H1 (cell line): ENCODE measurements at regions of chr2 and their contacts with region 1.

Region 1: GRCh38 chr2:1750933-1751766 is 6.8 kb upstream of the PXDN start:
- DNase-seq: peak; percentile 65 to 85
- H3K4me3 ChIP-seq: no peak overlapping the region
- H3K27ac ChIP-seq: no peak overlapping the region
- H3K4me1 ChIP-seq: peaks cover 0 to 3% (median 0%) of the 10 kb centered on the region in 4 experiments; a peak in 1 of 7 replicates
- H3K27me3 ChIP-seq: peaks cover 0 to 21% (median 5%) of the 10 kb centered on the region in 4 experiments; a peak in 3 of 7 replicates
- CTCF ChIP-seq: peak in 2 of 3 experiments; percentile 78 to 92; a peak in 3 of 4 replicates
- EP300 ChIP-seq: no peak
- POLR2A ChIP-seq: no peak
- RAD21 ChIP-seq: peak; percentile 70 to 74

Region 2: GRCh38 chr2:1591978-1592907 is 158.9 kb before region 1 on chr2:
- CTCF ChIA-PET with region 1: interaction called, 14 read pairs
- POLR2A ChIA-PET with region 1: no interaction called
- DNase-seq: peak; percentile 82 to 83
- H3K4me3 ChIP-seq: 0 out of 8 replicates have a peak overlapping the region, but pooled peaks of 1 of the 4 experiments have one; percentile 15
- H3K27ac ChIP-seq: no peak overlapping the region
- H3K4me1 ChIP-seq: peaks cover 0 to 16% (median 10%) of the 10 kb centered on the region in 4 experiments; a peak in 6 of 7 replicates
- H3K27me3 ChIP-seq: no peaks in the 10 kb centered on the region
- CTCF ChIP-seq: peak in 2 of 3 experiments; percentile 87 to 93; a peak in 3 of 4 replicates
- EP300 ChIP-seq: no peak
- POLR2A ChIP-seq: no peak
- RAD21 ChIP-seq: peak; percentile 89 to 92

Region 3: GRCh38 chr2:1685957-1686784 is 65.0 kb before region 1 on chr2:
- CTCF ChIA-PET with region 1: interaction called, 17 read pairs
- POLR2A ChIA-PET with region 1: no interaction called
- DNase-seq: peak in 1 of 2 experiments; percentile 64
- H3K4me3 ChIP-seq: no peak overlapping the region
- H3K27ac ChIP-seq: peak overlapping the region; percentile 63; the same call in 1 of the 2 replicates
- H3K4me1 ChIP-seq: peaks cover 0 to 11% (median 5%) of the 10 kb centered on the region in 4 experiments; a peak in 5 of 7 replicates
- H3K27me3 ChIP-seq: no peaks in the 10 kb centered on the region
- CTCF ChIP-seq: no peak
- EP300 ChIP-seq: no peak
- POLR2A ChIP-seq: no peak
- RAD21 ChIP-seq: no peak

Region 4: DNA sequence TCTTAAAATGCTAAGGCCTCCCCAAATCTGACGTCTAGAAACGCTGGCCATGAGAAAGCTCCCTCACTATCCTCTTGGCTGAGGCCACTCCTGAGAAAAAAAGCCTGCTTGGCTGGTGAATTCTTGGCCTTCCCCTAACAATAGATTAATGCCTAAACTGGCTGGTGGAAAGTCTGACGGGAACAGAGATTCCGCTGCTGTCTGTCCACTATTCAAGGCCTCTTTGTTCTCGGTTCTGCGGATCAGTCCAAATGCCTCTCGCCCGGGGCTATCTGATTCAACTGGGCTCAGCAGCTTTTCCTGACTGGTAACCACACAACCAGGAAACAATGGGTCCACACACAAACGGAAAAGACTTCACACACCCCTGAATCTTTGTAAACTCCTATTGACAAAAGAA is 34.0 kb before region 1 on chr2:
- CTCF ChIA-PET with region 1: interaction called, 13 read pairs
- POLR2A ChIA-PET with region 1: interaction called, 4 read pairs
- DNase-seq: no peak
- H3K4me3 ChIP-seq: no peak overlapping the region
- H3K27ac ChIP-seq: no peak overlapping the region
- H3K4me1 ChIP-seq: peaks cover 0 to 24% (median 2%) of the 10 kb centered on the region in 4 experiments; a peak in 5 of 7 replicates
- H3K27me3 ChIP-seq: no peaks in the 10 kb centered on the region
- CTCF ChIP-seq: no peak
- EP300 ChIP-seq: no peak
- POLR2A ChIP-seq: no peak
- RAD21 ChIP-seq: no peak

Region 5: DNA sequence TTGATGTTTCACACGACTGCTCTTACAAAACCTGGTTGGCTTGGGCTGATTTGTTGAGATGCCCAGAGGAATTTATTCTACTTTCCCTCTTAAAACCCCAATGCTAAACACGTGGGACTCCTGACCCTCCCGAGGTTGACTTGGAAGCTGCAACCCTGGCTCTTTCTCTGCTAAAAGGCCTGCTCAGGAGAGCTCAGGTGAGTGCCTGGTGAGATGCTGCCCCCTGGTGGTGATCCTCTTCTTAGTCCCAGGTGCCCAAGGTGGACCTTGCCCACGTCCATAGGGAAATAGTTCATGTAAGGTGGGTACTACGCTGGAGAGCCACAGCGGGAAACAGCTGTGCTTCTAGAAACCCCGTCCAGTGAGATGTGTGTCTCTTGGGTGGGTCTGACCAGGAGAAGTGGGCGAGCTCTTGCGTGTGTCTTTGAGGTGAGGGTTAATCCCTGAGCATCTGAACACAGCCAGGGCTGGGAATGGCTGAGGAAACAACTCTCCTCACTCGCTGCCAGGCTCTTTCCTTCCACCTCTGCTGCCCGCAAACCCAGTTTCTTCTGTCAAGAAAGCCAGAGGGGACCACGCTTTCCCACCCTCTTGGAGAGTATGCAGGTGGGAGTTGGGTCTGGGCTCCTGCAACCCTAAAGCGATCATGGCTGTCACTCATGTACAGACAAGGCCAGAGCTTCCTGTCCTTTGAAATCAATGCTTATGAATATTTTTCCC is 18.7 kb after region 1 on chr2:
- CTCF ChIA-PET with region 1: interaction called, 133 read pairs
- POLR2A ChIA-PET with region 1: interaction called, 4 read pairs
- DNase-seq: peak; percentile 87 to 95
- H3K4me3 ChIP-seq: no peak overlapping the region
- H3K27ac ChIP-seq: no peak overlapping the region
- H3K4me1 ChIP-seq: peaks cover 3 to 20% (median 14%) of the 10 kb centered on the region in 4 experiments
- H3K27me3 ChIP-seq: no peaks in the 10 kb centered on the region; a peak in 1 of 7 replicates
- CTCF ChIP-seq: peak; percentile 91 to 98 (median 95)
- EP300 ChIP-seq: no peak
- POLR2A ChIP-seq: no peak
- RAD21 ChIP-seq: peak; percentile 98

Region 6: DNA sequence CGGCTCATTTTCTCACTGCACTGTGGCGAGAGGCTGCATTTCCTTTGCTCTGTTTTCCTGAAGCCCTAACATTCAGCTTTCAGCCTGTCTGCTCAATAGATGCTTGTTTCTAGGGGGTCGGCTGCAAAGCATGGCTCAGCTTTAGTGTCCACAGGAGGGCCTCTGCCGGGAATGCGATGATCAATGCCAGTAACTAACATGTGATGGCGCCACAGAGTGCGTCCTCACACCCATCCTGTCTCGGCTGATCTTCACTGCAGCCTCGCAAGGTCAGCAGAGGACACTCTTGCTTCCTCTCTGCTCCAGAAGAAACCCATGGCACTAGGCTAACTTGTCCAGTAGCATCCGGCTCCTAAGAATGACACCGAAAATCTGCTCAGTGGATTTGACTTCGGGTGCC is 149.6 kb after region 1 on chr2:
- CTCF ChIA-PET with region 1: no interaction called
- POLR2A ChIA-PET with region 1: no interaction called
- DNase-seq: peak; percentile 59 to 72
- H3K4me3 ChIP-seq: no peak overlapping the region
- H3K27ac ChIP-seq: no peak overlapping the region
- H3K4me1 ChIP-seq: no peaks in the 10 kb centered on the region
- H3K27me3 ChIP-seq: no peaks in the 10 kb centered on the region
- CTCF ChIP-seq: peak; percentile 96 to 99 (median 97)
- EP300 ChIP-seq: no peak
- POLR2A ChIP-seq: no peak
- RAD21 ChIP-seq: peak; percentile 80 to 83

Region 7: DNA sequence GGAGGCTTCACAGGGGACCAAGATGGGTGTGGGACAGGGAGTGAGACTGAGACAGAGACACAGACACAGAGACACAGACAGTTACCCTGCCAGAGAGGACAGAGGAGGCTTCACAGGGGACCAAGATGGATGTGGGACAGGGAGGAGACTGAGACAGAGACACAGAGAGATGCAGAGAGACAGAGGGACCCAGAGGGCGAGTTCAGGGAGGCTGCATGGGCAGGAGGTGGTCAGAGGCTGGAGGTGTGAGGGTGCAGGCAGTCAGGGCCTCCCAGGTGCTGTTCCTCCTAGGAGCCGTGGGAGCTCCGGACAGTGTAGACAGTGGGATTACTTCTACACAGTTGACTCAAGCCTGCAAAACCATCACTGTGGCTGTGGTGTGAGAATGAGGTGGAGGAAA is 199.3 kb after region 1 on chr2:
- CTCF ChIA-PET with region 1: no interaction called
- POLR2A ChIA-PET with region 1: no interaction called
- DNase-seq: no peak
- H3K4me3 ChIP-seq: no peak overlapping the region
- H3K27ac ChIP-seq: no peak overlapping the region
- H3K4me1 ChIP-seq: no peaks in the 10 kb centered on the region
- H3K27me3 ChIP-seq: no peaks in the 10 kb centered on the region
- CTCF ChIP-seq: no peak
- EP300 ChIP-seq: no peak
- POLR2A ChIP-seq: no peak
- RAD21 ChIP-seq: no peak